Left ventricle myocardium inferior (tissue), 1 donor: ENCODE measurements at regions of chr11 and their contacts with region 1.

Region 1: GRCh38 chr11:111230122-111230465 is 15.4 kb upstream of the POU2AF2 start:
- DNase-seq: no peak
- H3K4me3 ChIP-seq: peak overlapping the region; percentile 62
- H3K27ac ChIP-seq: no peak overlapping the region
- H3K4me1 ChIP-seq: peaks cover 4% of the 10 kb centered on the region
- H3K27me3 ChIP-seq: peaks cover 33% of the 10 kb centered on the region
- CTCF ChIP-seq: no peak

Region 2: GRCh38 chr11:110463153-110463552 is 766.9 kb before region 1 on chr11:
- intact Hi-C with region 1: loop called (anchors 10 kb)
- DNase-seq: peak; percentile 34
- H3K4me3 ChIP-seq: no peak overlapping the region
- H3K27ac ChIP-seq: no peak overlapping the region
- H3K4me1 ChIP-seq: no peaks in the 10 kb centered on the region
- H3K27me3 ChIP-seq: no peaks in the 10 kb centered on the region
- CTCF ChIP-seq: peak; percentile 49

Region 3: DNA sequence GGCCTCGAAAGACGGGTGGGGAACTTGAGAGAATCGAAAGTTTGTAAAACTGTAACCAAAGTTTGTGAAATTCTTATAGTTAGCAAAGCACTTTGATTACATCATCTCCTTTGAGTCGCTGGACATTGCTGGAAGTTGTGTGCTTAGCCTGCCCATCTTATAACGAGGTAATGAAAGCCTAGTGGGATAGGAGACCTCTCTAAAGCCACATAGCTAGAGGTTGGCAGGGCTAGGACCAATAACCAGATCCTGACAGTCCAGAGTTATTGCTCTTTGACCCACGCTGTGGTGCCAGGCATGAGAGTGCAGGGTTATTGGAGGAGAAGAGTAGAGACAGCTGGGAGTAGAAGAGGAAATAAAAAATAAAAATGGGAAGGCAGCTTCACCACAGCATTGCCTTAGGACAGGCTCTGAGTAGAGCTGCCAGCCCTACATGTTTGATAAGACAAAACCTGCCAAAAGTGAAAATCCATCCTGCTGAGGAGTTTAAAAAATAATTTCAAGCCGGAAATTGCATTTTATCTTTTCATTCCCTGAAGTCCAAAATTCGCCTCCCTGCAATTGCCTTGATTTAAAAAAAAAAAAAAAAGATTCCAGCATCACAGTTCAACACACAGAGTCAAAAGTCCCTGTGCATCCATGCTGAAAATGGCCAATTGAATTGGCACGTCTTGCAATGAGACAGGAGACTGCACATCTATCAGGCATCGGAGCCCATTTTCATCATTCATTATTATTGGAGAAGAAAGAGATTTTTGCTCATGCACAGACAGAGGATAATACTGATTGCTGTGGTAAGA is 210.0 kb before region 1 on chr11:
- intact Hi-C with region 1: no loop called
- DNase-seq: no peak
- H3K4me3 ChIP-seq: no peak overlapping the region
- H3K27ac ChIP-seq: peak overlapping the region; percentile 32
- H3K4me1 ChIP-seq: no peaks in the 10 kb centered on the region
- H3K27me3 ChIP-seq: no peaks in the 10 kb centered on the region
- CTCF ChIP-seq: no peak

Region 4: DNA sequence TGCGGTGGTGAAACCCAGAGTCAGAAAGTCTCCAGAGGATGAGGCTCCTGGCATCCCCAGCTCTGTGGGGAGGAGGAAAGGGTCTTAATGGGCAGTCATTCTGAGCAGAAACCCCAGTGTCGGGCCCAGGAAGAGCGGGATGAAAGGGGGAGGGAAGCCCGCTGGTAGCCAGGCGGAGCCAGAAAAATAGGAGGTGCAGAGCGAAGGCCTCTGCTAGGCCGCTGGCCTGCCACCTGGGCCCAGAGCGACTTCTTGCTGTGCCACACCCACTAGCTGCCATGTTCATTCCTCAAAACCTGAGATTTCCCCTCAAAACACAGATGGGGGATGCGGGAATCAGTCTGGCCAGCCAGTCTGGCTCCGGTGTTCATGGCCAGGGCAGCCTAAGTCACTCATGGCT is 67.6 kb after region 1 on chr11:
- intact Hi-C with region 1: no loop called
- DNase-seq: no peak
- H3K4me3 ChIP-seq: no peak overlapping the region
- H3K27ac ChIP-seq: no peak overlapping the region
- H3K4me1 ChIP-seq: peaks cover 16% of the 10 kb centered on the region
- H3K27me3 ChIP-seq: peaks cover 31% of the 10 kb centered on the region
- CTCF ChIP-seq: no peak

Region 5: GRCh38 chr11:111540114-111540936 is 310.2 kb after region 1 on chr11 and contains the start of gene LAYN:
- intact Hi-C with region 1: no loop called
- DNase-seq: peak; percentile 46
- H3K4me3 ChIP-seq: peak within 1 kb of the TSS; percentile 72
- H3K27ac ChIP-seq: peak within 1 kb of the TSS; percentile 75
- H3K4me1 ChIP-seq: peaks cover 31% of the 10 kb centered on the region
- H3K27me3 ChIP-seq: peaks cover 47% of the 10 kb centered on the region
- CTCF ChIP-seq: no peak
- total RNA-seq, gene LAYN: 2.8 TPM